Activated T-helper 1 cell treated with anti-CD3 and anti-CD28 coated beads, Interleukin-12 subunit alpha, Interleukin-12 subunit beta, Interleukin-2, Interleukin-4 antibody, amounts not matched to agents 30 ng/mL and 10 ng/mL and 1 ng/mL, durations not matched to agents 14 hours and 24 hours and 36 hours (primary cell): ENCODE measurements at regions of chr22 and their contacts with region 1.

Region 1: DNA sequence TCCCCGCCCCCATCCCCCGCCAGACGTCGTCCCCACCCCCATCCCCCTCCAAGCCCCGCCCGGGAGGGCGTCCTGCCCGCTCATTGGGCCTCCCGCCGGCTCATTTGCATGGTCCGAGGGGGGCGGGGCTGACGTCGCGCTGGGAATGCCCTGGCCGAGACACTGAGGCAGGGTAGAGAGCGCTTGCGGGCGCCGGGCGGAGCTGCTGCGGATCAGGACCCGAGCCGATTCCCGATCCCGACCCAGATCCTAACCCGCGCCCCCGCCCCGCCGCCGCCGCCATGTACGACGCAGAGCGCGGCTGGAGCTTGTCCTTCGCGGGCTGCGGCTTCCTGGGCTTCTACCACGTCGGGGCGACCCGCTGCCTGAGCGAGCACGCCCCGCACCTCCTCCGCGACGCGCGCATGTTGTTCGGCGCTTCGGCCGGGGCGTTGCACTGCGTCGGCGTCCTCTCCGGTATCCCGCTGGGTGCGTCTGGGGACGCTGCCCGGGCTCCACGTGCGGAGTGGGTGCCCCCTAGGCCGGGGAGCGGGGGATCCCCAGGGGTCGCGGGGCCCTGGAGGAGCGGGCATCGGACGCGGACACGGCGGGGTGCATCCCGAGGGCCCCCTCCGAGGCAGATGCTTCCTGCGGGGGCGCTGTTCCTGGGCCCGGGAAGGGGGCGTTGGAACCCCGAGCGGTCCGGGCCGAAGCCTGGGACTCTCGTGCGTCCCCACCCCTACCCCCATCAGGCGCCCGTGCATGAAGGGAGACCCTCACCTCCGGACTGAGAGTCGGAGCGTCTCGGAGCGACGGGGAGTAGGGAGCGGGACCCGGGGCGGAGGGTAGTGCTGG is at the start of gene PNPLA3:
- DNase-seq: peak; percentile 79
- H3K4me3 Mint-ChIP-seq: peak within 1 kb of the TSS; percentile 85
- H3K27ac Mint-ChIP-seq: peak within 1 kb of the TSS; percentile 85
- H3K4me1 Mint-ChIP-seq: peaks cover 6% of the 10 kb centered on the region
- H3K27me3 Mint-ChIP-seq: peaks cover 15% of the 10 kb centered on the region
- total RNA-seq, gene PNPLA3: 0.86 and 1.6 TPM in 2 replicates

Region 2: GRCh38 chr22:43812149-43812842 is 111.6 kb before region 1 on chr22 and contains the start of gene EFCAB6:
- intact Hi-C with region 1: loop called (anchors 1 kb)
- DNase-seq: peak; percentile 86
- H3K4me3 Mint-ChIP-seq: peak within 1 kb of the TSS; percentile 94
- H3K27ac Mint-ChIP-seq: peak within 1 kb of the TSS; percentile 88
- H3K4me1 Mint-ChIP-seq: peaks cover 39% of the 10 kb centered on the region
- H3K27me3 Mint-ChIP-seq: peaks cover 5% of the 10 kb centered on the region
- total RNA-seq, gene EFCAB6: 0.17 TPM in 1 of 2 replicates, not detected in the other